ENCODE measurements at regions of chr4 and their contacts with region 1.

Region 1: DNA sequence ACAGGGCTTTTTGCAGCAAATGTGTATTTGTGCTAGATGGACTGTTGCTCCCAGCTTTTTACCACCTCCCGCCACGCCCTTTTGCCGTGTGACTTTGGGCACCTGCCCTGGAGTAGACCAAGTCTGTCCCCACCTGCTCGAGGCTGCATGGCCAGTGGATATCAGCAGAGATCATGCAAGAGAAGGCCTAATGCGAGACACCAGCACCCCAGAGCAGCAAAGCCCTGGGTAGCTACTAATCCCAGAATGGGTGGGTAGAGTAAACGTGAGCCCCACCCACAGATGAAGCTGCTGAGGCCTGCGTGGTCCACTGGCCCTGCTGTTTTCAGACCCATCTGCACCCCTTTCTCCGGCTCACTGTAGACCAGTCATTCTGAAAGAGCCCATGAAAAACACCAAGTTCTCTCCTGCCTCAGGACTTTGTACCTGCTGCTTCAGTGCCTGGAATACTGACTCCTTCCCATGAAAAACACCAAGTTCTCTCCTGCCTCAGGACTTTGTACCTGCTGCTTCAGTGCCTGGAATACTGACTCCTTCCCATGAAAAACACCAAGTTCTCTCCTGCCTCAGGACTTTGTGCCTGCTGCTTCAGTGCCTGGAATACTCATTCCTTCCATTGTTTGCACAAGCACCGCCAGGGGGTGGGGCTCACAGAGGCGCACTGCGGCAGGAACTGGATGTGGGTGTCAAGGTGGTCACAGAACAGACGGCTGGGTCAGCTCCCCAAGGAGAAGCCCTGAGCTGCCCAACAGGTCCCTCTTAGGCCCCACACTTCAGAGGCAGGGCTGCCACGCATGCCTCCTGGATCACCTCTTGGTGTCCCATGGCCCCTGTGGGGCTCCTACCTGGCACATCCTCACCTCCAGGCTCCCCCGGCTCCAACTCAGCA is 5.1 kb upstream of the TNIP2 start:
- DNase-seq: no peak
- H3K4me3 ChIP-seq: no peak overlapping the region
- H3K27ac ChIP-seq: no peak overlapping the region
- H3K4me1 ChIP-seq: peaks cover 0 to 4% of the 10 kb centered on the region in 2 donors
- H3K27me3 ChIP-seq: no peaks in the 10 kb centered on the region
- CTCF ChIP-seq: no peak
- POLR2A ChIP-seq: no peak

Region 2: GRCh38 chr4:2934813-2935761 is 173.8 kb after region 1 on chr4:
- intact Hi-C with region 1: loop called in 1 of 2 experiments (anchors 10 kb)
- DNase-seq: peak; percentile 91 to 97 (median 97)
- H3K4me3 ChIP-seq: peak overlapping the region; percentile 3 to 98 (median 82)
- H3K27ac ChIP-seq: peak overlapping the region; percentile 57 to 95 (median 84)
- H3K4me1 ChIP-seq: peaks cover 16 to 38% of the 10 kb centered on the region in 2 donors
- H3K27me3 ChIP-seq: no peaks in the 10 kb centered on the region
- CTCF ChIP-seq: peak in 2 of 6 experiments; percentile 46 to 48
- POLR2A ChIP-seq: peak; percentile 80 to 91

Region 3: GRCh38 chr4:3037957-3038461 is 276.7 kb after region 1 on chr4:
- intact Hi-C with region 1: loop called (anchors 5 to 10 kb)
- DNase-seq: peak in 2 of 7 donors; percentile 13 to 14
- H3K4me3 ChIP-seq: peak overlapping the region in 1 of 4 donors; percentile 18
- H3K27ac ChIP-seq: no peak overlapping the region
- H3K4me1 ChIP-seq: peaks cover 10 to 24% of the 10 kb centered on the region in 2 donors
- H3K27me3 ChIP-seq: no peaks in the 10 kb centered on the region
- CTCF ChIP-seq: no peak
- POLR2A ChIP-seq: no peak

Measured in adrenal gland (tissue), 19 donors.